Aorta (tissue), 5 donors: ENCODE measurements at regions of chr12 and their contacts with region 1.

Region 1: GRCh38 chr12:89352492-89353187 is at the start of gene DUSP6:
- DNase-seq: peak; percentile 97 to 98
- ATAC-seq: peak; percentile 89
- H3K4me3 ChIP-seq: peak within 1 kb of the TSS; percentile 58 to 99
- H3K27ac ChIP-seq: peak within 1 kb of the TSS; percentile 70 to 91
- H3K4me1 ChIP-seq: peaks cover 0 to 6% of the 10 kb centered on the region in 2 donors
- H3K27me3 ChIP-seq: no peaks in the 10 kb centered on the region
- total RNA-seq, gene DUSP6: 94.6 to 96.8 TPM

Region 2: DNA sequence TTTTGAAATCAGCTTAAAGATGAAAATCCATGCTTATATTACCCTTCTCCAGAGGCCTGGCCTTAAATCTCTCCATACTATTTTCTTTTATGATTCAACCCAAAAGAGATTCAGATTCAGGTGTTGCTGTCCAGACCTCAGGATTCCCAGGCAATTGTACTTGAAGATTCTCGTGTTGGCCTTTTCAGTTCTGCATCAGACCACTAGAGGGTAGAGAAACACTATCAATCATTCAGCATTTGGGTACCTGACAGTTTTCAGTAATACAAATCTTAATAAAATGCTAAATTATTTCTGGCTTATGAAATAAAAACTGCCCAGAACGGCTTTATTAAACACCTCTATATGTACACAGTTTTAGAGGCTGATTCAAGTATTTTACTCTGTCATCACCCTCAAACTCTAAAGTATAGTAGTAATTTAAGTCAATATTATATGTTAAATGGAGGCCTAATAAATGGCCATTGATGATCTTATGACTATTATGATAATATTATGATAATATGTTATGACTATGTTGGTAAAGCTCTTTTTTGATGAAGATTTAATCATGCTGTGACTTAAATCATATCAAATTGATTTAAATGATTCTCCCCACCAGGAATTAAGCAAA is 301.5 kb before region 1 on chr12:
- intact Hi-C with region 1: loop called in 1 of 2 experiments (anchors 5 kb)
- DNase-seq: no peak
- ATAC-seq: no peak
- H3K4me3 ChIP-seq: no peak overlapping the region
- H3K27ac ChIP-seq: no peak overlapping the region
- H3K4me1 ChIP-seq: no peaks in the 10 kb centered on the region
- H3K27me3 ChIP-seq: no peaks in the 10 kb centered on the region

Region 3: DNA sequence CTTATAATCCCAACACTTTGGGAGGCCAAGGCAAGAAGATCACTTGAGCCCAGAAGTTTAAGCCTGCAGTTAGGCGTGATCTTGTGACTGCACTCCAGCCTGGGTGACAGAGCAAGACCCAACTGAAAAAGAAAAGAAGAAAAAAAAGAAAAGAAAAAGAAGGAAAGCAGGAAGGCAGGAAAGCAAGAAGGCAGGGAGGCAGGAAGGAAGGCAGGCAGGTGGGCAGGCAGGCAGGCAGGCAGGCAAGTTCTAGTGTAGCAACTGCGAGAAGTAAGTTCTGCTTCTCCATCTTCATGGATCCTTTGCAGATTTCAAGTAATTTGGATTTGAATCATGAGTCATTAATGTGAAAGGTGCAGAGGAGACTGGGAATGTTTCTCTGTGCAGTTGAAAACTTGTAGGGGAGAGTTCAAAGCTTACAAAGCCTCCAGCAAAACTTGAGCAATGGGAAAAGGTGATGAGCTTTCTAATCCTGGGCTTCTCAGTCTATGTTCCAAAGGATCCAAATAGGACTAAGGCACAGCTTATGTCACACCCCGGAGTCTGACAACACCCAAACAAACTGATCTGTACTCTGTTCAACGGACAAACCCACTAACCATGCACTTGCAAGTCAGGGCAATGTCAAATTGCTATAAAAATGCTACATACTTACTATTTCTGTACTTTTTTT is 135.3 kb before region 1 on chr12:
- intact Hi-C with region 1: loop called in 1 of 2 experiments (anchors 5 kb)
- DNase-seq: no peak
- ATAC-seq: no peak
- H3K4me3 ChIP-seq: no peak overlapping the region
- H3K27ac ChIP-seq: no peak overlapping the region
- H3K4me1 ChIP-seq: no peaks in the 10 kb centered on the region
- H3K27me3 ChIP-seq: no peaks in the 10 kb centered on the region

Region 4: GRCh38 chr12:89405626-89406345 is 53.1 kb after region 1 on chr12:
- intact Hi-C with region 1: no loop called
- DNase-seq: no peak
- ATAC-seq: no peak
- H3K4me3 ChIP-seq: no peak overlapping the region
- H3K27ac ChIP-seq: no peak overlapping the region
- H3K4me1 ChIP-seq: no peaks in the 10 kb centered on the region
- H3K27me3 ChIP-seq: no peaks in the 10 kb centered on the region

Region 5: DNA sequence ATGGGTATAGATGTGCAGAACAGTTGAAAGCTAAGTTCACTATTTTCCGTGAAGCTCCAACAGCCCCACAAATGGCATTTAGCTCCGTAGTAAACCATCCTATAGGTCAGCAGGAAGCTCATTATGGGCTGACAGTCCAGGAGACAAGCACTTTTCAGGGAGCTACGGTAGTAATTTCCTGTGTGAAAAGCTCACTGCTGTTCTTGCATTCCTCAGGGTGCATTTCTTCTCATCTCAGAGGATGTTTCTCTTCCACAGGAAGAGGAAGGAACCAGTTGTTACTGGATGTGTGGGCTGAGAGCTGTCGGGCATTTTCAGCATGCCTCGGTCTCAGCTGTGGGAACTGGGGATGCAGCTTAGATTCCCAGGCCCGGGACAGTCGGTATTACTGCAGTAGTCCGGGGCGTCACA is 99.2 kb after region 1 on chr12:
- intact Hi-C with region 1: loop called (anchors 2 kb)
- DNase-seq: peak in 1 of 2 donors; percentile 58
- ATAC-seq: peak; percentile 76
- H3K4me3 ChIP-seq: no peak overlapping the region
- H3K27ac ChIP-seq: peak overlapping the region in 1 of 2 donors; percentile 73
- H3K4me1 ChIP-seq: peaks cover 4 to 5% of the 10 kb centered on the region in 2 donors
- H3K27me3 ChIP-seq: no peaks in the 10 kb centered on the region

Region 6: GRCh38 chr12:89709157-89709994 is 356.7 kb after region 1 on chr12:
- intact Hi-C with region 1: loop called in 1 of 2 experiments (anchors 10 kb)
- DNase-seq: peak; percentile 100
- ATAC-seq: peak; percentile 97
- H3K4me3 ChIP-seq: peak overlapping the region; percentile 52 to 94
- H3K27ac ChIP-seq: peak overlapping the region; percentile 34 to 91
- H3K4me1 ChIP-seq: no peaks in the 10 kb centered on the region
- H3K27me3 ChIP-seq: no peaks in the 10 kb centered on the region

Region 7: GRCh38 chr12:89721291-89721987 is 368.8 kb after region 1 on chr12:
- intact Hi-C with region 1: no loop called
- DNase-seq: no peak
- ATAC-seq: no peak
- H3K4me3 ChIP-seq: no peak overlapping the region
- H3K27ac ChIP-seq: no peak overlapping the region
- H3K4me1 ChIP-seq: no peaks in the 10 kb centered on the region
- H3K27me3 ChIP-seq: no peaks in the 10 kb centered on the region

Region 8: GRCh38 chr12:90028635-90029051 is 676.0 kb after region 1 on chr12:
- intact Hi-C with region 1: no loop called
- DNase-seq: no peak
- ATAC-seq: no peak
- H3K4me3 ChIP-seq: no peak overlapping the region
- H3K27ac ChIP-seq: no peak overlapping the region
- H3K4me1 ChIP-seq: no peaks in the 10 kb centered on the region
- H3K27me3 ChIP-seq: no peaks in the 10 kb centered on the region